ENCODE measurements at regions of chr12 and their contacts with region 1.

Region 1: DNA sequence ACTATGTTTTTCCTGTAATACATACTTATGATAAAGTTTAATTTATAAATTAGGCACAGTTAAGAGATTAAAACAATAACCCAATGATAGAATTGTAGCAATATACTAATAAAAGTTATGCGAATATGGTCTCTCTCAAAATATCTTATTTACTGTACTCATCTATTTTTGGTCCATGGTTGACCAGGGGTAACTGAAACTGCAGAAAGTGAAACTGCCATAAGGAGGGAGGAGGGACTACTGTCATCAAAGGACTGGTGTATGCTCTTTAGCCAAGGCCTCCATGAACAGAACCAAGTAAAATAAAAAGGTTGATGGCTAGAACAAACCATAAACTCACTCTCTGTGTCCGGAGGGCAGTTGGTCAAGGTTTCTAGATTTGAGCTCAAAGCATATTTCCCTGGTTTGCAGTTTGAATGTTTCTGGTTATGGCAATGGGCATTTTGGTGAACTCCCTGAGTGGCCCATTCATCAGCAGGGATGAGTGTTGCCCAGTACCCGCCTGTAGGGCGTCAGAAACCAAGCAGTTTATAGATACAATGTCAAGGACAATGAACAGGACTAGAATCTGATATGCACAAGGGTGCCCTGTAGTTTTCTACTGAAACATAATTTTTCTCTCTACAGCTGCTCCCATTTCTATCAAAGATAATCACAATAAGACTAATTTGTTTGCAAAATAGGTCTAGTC is 19.8 kb downstream of the LEMD3 start:
- DNase-seq: no peak
- ATAC-seq: peak; percentile 91
- H3K4me3 ChIP-seq: peak overlapping the region; percentile 30; the same call in 1 of the 2 replicates
- H3K27ac ChIP-seq: peak overlapping the region; percentile 83
- H3K4me1 ChIP-seq: peaks cover 33% of the 10 kb centered on the region
- H3K27me3 ChIP-seq: no peaks in the 10 kb centered on the region
- CTCF ChIP-seq: no peak
- EP300 ChIP-seq: peak in 1 of 2 experiments; percentile 48; a peak in 1 of 4 replicates
- POLR2A ChIP-seq: no peak
- RAD21 ChIP-seq: no peak

Region 2: GRCh38 chr12:65067383-65067782 is 121.8 kb before region 1 on chr12:
- CTCF ChIA-PET with region 1: no interaction called
- POLR2A ChIA-PET with region 1: no interaction called
- RAD21 ChIA-PET with region 1: no interaction called
- SMC1A ChIA-PET with region 1: no interaction called
- in situ Hi-C with region 1: no loop called
- intact Hi-C with region 1: no loop called
- DNase-seq: no peak
- ATAC-seq: no peak
- H3K4me3 ChIP-seq: no peak overlapping the region
- H3K27ac ChIP-seq: no peak overlapping the region
- H3K4me1 ChIP-seq: no peaks in the 10 kb centered on the region
- H3K27me3 ChIP-seq: no peaks in the 10 kb centered on the region; a peak in 1 of 4 replicates
- CTCF ChIP-seq: no peak
- EP300 ChIP-seq: no peak
- POLR2A ChIP-seq: no peak
- RAD21 ChIP-seq: no peak

Region 3: GRCh38 chr12:65163755-65164154 is 25.4 kb before region 1 on chr12:
- CTCF ChIA-PET with region 1: interaction called, 11 read pairs
- POLR2A ChIA-PET with region 1: interaction called, 23 read pairs
- RAD21 ChIA-PET with region 1: interaction called, 25 read pairs
- SMC1A ChIA-PET with region 1: interaction called, 155 read pairs
- in situ Hi-C with region 1: no loop called
- intact Hi-C with region 1: no loop called
- DNase-seq: no peak
- ATAC-seq: peak; percentile 92
- H3K4me3 ChIP-seq: no peak overlapping the region
- H3K27ac ChIP-seq: no peak overlapping the region
- H3K4me1 ChIP-seq: peaks cover 16% of the 10 kb centered on the region
- H3K27me3 ChIP-seq: no peaks in the 10 kb centered on the region
- CTCF ChIP-seq: no peak
- EP300 ChIP-seq: no peak
- POLR2A ChIP-seq: no peak
- RAD21 ChIP-seq: no peak

Region 4: DNA sequence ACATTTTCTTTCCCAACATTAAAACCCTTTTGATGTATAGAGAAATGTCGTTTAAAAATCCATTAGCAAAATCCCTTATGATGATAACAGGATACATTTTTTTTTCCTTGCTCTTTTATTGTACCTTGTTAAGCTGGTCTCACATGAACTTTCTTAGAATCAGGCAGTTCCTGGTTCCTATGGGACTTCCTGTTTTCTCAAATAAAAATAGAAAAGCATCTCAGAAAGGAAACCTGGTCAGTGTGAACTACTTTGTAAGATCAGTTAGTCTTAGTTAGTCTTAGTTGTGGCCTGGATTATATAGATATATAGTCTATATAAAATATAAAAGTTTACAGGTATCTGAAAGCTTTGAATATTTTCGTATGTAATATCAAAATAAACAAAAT is 20.5 kb after region 1 on chr12:
- CTCF ChIA-PET with region 1: interaction called, 9 read pairs
- POLR2A ChIA-PET with region 1: interaction called, 4 read pairs
- RAD21 ChIA-PET with region 1: interaction called, 16 read pairs
- SMC1A ChIA-PET with region 1: interaction called, 38 read pairs
- in situ Hi-C with region 1: no loop called
- intact Hi-C with region 1: no loop called
- DNase-seq: no peak
- ATAC-seq: peak; percentile 86
- H3K4me3 ChIP-seq: no peak overlapping the region
- H3K27ac ChIP-seq: peak overlapping the region; percentile 80
- H3K4me1 ChIP-seq: peaks cover 21% of the 10 kb centered on the region
- H3K27me3 ChIP-seq: no peaks in the 10 kb centered on the region
- CTCF ChIP-seq: no peak
- EP300 ChIP-seq: no peak
- POLR2A ChIP-seq: no peak
- RAD21 ChIP-seq: no peak

Region 5: DNA sequence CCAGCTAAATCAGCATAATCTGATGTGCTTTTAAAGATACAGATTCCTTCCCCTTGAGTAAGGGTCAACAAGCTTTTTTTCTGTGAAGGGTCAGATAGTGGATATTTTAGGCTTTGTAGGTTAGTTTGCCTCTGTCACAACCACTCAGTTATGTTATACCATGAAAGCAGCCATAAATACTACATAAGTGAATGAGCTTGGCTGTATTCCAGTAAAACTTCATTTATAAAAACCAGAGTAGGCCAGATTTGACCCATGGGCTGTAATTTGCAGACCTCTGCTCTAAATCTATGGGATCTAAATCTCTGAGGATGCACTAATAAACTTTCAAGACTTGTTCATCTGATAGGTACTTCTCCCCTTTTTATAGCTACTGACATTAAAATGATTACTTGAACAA is 27.9 kb after region 1 on chr12:
- CTCF ChIA-PET with region 1: no interaction called
- POLR2A ChIA-PET with region 1: interaction called, 4 read pairs
- RAD21 ChIA-PET with region 1: no interaction called
- SMC1A ChIA-PET with region 1: interaction called, 10 read pairs
- in situ Hi-C with region 1: no loop called
- intact Hi-C with region 1: no loop called
- DNase-seq: no peak
- ATAC-seq: no peak
- H3K4me3 ChIP-seq: no peak overlapping the region
- H3K27ac ChIP-seq: no peak overlapping the region
- H3K4me1 ChIP-seq: no peaks in the 10 kb centered on the region
- H3K27me3 ChIP-seq: no peaks in the 10 kb centered on the region
- CTCF ChIP-seq: no peak
- EP300 ChIP-seq: no peak
- POLR2A ChIP-seq: no peak
- RAD21 ChIP-seq: no peak

Region 6: GRCh38 chr12:65403188-65403587 is 214.0 kb after region 1 on chr12:
- CTCF ChIA-PET with region 1: no interaction called
- POLR2A ChIA-PET with region 1: no interaction called
- RAD21 ChIA-PET with region 1: no interaction called
- SMC1A ChIA-PET with region 1: no interaction called
- in situ Hi-C with region 1: no loop called
- intact Hi-C with region 1: no loop called
- DNase-seq: no peak
- ATAC-seq: no peak
- H3K4me3 ChIP-seq: no peak overlapping the region
- H3K27ac ChIP-seq: no peak overlapping the region
- H3K4me1 ChIP-seq: no peaks in the 10 kb centered on the region
- H3K27me3 ChIP-seq: no peaks in the 10 kb centered on the region
- CTCF ChIP-seq: no peak
- EP300 ChIP-seq: no peak
- POLR2A ChIP-seq: no peak
- RAD21 ChIP-seq: no peak

Region 7: GRCh38 chr12:65525491-65526161 is 336.5 kb after region 1 on chr12:
- CTCF ChIA-PET with region 1: no interaction called
- POLR2A ChIA-PET with region 1: no interaction called
- RAD21 ChIA-PET with region 1: no interaction called
- SMC1A ChIA-PET with region 1: no interaction called
- in situ Hi-C with region 1: no loop called
- intact Hi-C with region 1: no loop called
- DNase-seq: no peak
- ATAC-seq: no peak
- H3K4me3 ChIP-seq: no peak overlapping the region
- H3K27ac ChIP-seq: no peak overlapping the region
- H3K4me1 ChIP-seq: no peaks in the 10 kb centered on the region
- H3K27me3 ChIP-seq: no peaks in the 10 kb centered on the region
- CTCF ChIP-seq: no peak
- EP300 ChIP-seq: no peak
- POLR2A ChIP-seq: no peak
- RAD21 ChIP-seq: no peak